Activated naive CD8-positive, alpha-beta T cell treated with anti-CD3 and anti-CD28 coated beads, Interleukin-2, amount 10 ng/mL, durations not matched to agents 7 days and 5 days (primary cell): ENCODE measurements at regions of chr6 and their contacts with region 1.

Region 1: GRCh38 chr6:33425668-33426577 is 6.1 kb downstream of the SYNGAP1 start:
- DNase-seq: peak; percentile 84
- ATAC-seq: peak; percentile 68
- H3K4me3 Mint-ChIP-seq: peak overlapping the region; percentile 94
- H3K27ac Mint-ChIP-seq: peak overlapping the region; percentile 95
- H3K4me1 Mint-ChIP-seq: peaks cover 65% of the 10 kb centered on the region
- H3K27me3 Mint-ChIP-seq: peaks cover 3% of the 10 kb centered on the region

Region 2: DNA sequence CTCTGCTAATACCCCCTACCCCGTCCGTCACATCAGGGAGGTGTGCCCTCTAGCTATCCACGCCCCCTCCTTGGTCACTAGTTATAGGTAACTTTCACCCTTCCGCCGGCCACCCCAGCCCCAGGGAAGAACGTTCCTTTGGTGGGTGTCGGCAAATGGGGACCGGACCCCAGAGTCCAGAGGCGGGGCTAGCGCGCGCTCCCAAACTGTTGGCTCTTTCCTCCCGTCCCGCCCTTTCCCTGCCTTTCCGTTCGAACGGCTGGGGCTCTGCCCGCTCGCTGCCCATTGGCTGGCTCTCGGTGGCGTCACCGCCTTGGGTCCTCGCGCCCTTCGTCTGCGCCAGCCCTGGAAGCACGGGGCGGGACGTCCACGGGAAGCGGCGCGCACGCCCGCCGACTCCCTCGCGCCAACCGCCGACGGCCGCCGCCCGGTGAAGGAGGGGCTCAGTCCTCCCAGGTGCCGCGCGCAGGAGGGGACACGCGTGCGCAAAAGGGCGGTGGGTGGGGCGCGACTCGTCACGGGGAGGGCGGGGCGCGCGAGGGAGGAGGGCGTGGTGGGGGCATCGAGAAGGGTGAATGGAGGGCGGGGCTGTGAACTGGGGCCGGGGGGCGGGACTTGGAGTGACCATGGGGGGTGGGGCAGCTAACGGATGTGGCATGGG is 15.7 kb before region 1 on chr6:
- POLR2A ChIA-PET with region 1: interaction called, 14 read pairs
- DNase-seq: peak; percentile 99
- ATAC-seq: peak; percentile 88
- H3K4me3 Mint-ChIP-seq: peak overlapping the region; percentile 93
- H3K27ac Mint-ChIP-seq: peak overlapping the region; percentile 99
- H3K4me1 Mint-ChIP-seq: peaks cover 36% of the 10 kb centered on the region
- H3K27me3 Mint-ChIP-seq: no peaks in the 10 kb centered on the region